IMR-90 (cell line): ENCODE measurements at regions of chr18 and their contacts with region 1.

Region 1: DNA sequence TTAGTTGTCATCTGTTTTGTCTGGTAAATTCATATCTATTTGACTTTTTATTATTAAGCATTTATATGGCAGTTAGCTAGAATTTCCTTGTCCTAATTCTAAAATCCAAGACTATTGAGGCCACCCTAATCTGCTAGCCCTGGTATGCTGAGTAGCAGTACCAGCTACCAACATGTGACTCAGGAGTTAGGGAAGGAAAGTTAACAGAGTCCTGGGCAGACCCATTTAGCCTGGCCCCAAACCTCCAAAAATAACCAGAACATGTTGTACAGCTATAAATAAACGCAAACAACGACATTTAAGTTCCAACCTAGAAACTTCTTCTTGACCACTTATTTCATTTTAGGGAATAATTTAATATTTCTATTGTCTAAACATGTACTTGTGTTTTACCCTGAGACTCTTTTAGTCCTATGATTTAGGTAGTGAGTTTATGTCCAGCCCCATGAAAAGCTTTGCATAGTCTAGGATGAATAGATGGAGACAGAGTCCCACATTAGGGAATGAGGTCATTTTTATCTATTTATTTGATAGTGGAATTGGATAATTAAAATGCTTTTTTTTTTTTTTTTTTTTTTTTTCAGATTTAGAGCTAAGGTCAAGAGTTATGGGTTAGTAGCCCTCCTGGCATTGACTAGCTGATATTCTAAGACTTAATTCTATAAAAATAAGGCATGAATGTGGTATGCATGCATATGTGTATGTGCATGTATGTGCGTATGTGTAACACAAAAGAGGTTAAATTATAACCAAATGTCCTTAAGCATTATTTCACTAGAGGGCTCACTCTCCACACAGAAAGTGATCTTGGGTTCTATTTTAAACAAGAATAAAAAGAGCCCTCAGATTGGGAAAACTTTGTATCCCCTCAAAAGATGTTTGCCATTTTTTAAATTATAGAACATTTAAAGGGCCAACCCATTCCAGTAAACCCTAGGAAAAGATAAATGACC is 160.1 kb upstream of the MAPRE2 start:
- DNase-seq: peak; percentile 43
- ATAC-seq: peak; percentile 56; the same call in 1 of the 2 replicates
- H3K4me3 ChIP-seq: no peak overlapping the region
- H3K27ac ChIP-seq: no peak overlapping the region
- H3K4me1 ChIP-seq: no peaks in the 10 kb centered on the region
- H3K27me3 ChIP-seq: no peaks in the 10 kb centered on the region
- CTCF ChIP-seq: peak; percentile 54
- POLR2A ChIP-seq: no peak
- RAD21 ChIP-seq: peak; percentile 58

Region 2: DNA sequence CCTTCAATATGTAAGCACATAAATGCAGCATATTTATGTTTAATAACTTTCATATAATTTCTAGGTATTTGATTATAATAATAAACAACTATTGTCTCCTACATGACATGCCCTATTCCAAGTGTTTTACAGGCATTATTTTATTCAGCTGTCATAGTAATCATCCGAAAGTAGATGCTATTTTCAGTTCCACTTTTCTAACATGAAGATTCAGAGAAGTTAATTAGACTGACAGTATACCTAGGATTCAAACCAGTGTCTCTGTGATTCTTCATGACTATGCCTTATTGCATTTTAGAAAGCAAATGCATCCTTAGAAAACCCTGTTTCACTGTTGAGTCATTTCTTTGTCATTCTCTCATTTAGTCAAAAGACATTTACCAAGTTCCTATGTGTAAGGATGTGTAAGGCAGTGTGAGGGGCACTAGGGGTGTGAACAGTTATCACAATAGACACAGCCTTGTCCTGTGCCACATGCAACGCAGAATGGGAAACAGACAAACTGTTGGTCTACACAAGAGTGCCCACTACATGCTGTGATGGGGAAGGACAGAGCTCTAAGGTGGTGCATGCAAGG is 91.3 kb before region 1 on chr18:
- CTCF ChIA-PET with region 1: no interaction called
- POLR2A ChIA-PET with region 1: no interaction called
- dilution Hi-C with region 1: no loop called
- in situ Hi-C with region 1: no loop called
- intact Hi-C with region 1: no loop called
- DNase-seq: peak; percentile 35
- ATAC-seq: peak; percentile 32
- H3K4me3 ChIP-seq: no peak overlapping the region
- H3K27ac ChIP-seq: no peak overlapping the region
- H3K4me1 ChIP-seq: peaks cover 1% of the 10 kb centered on the region; the same call in 1 of the 2 replicates
- H3K27me3 ChIP-seq: no peaks in the 10 kb centered on the region
- CTCF ChIP-seq: no peak
- POLR2A ChIP-seq: no peak
- RAD21 ChIP-seq: no peak

Region 3: GRCh38 chr18:34976899-34977837 is 96.0 kb after region 1 on chr18:
- CTCF ChIA-PET with region 1: interaction called, 4 read pairs
- POLR2A ChIA-PET with region 1: no interaction called
- dilution Hi-C with region 1: no loop called
- in situ Hi-C with region 1: no loop called
- intact Hi-C with region 1: loop called (anchors 1 kb)
- DNase-seq: peak; percentile 19
- ATAC-seq: peak; percentile 52
- H3K4me3 ChIP-seq: peak overlapping the region; percentile 73
- H3K27ac ChIP-seq: no peak overlapping the region
- H3K4me1 ChIP-seq: no peaks in the 10 kb centered on the region
- H3K27me3 ChIP-seq: peaks cover 25% of the 10 kb centered on the region
- CTCF ChIP-seq: no peak
- POLR2A ChIP-seq: no peak
- RAD21 ChIP-seq: no peak

Region 4: GRCh38 chr18:35005963-35006577 is 124.9 kb after region 1 on chr18:
- CTCF ChIA-PET with region 1: interaction called, 4 read pairs
- POLR2A ChIA-PET with region 1: no interaction called
- dilution Hi-C with region 1: no loop called
- in situ Hi-C with region 1: no loop called
- intact Hi-C with region 1: loop called (anchors 1 kb)
- DNase-seq: peak; percentile 70
- ATAC-seq: peak; percentile 88
- H3K4me3 ChIP-seq: no peak overlapping the region
- H3K27ac ChIP-seq: no peak overlapping the region
- H3K4me1 ChIP-seq: no peaks in the 10 kb centered on the region
- H3K27me3 ChIP-seq: no peaks in the 10 kb centered on the region
- CTCF ChIP-seq: peak; percentile 70
- POLR2A ChIP-seq: no peak
- RAD21 ChIP-seq: peak; percentile 90

Region 5: DNA sequence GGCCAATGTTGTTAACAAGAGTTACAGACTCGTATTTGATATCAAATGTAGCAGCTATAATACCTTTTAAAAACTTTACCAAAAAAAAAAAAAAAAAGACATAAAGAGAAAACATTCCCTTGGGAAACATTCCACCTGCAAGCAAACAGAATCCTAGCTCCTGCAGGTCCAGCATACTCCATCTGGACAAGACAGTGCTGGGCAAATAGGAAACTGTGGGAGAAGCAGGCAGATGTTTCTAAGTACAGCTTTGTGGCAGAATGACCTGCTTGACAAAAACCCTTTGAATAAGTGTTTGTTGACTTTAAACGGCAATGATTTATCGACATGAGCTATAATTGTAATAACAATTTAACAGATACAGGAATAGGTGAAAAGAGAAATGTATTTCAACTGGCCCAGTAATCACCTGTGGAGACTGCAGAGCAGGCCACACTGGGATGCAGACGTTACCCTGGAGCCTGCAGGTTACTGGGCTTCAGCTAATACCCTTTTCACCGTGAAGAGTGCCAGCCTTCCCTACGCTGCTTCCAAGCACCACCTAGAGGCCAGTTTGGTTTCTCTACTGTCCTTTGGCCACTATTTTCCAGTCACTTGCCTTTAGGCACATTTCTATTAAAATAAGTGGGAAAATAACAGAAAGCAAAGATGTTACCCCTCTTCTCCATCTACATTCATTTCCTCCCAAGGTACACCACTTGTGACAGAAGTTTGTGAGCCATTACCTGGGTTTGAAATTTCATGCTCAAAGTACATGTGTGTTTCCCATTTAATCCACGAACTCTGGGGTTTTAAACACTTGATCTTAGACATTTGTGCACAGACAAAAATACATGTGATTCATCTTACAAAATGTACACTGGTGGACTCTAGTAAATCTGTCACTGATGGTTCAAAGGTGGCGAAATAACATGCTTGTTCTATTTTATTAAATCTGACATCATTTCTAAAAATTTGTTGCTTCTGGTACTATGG is 262.8 kb after region 1 on chr18:
- CTCF ChIA-PET with region 1: interaction called, 6 read pairs
- POLR2A ChIA-PET with region 1: no interaction called
- dilution Hi-C with region 1: no loop called
- in situ Hi-C with region 1: no loop called
- intact Hi-C with region 1: loop called (anchors 1 kb)
- DNase-seq: peak; percentile 55
- ATAC-seq: peak; percentile 89
- H3K4me3 ChIP-seq: no peak overlapping the region
- H3K27ac ChIP-seq: no peak overlapping the region
- H3K4me1 ChIP-seq: no peaks in the 10 kb centered on the region
- H3K27me3 ChIP-seq: no peaks in the 10 kb centered on the region
- CTCF ChIP-seq: peak; percentile 83
- POLR2A ChIP-seq: 0 out of 2 replicates have a peak, but pooled peaks have one; percentile 38
- RAD21 ChIP-seq: peak; percentile 95

Region 6: GRCh38 chr18:35240664-35241447 is 359.7 kb after region 1 on chr18 and contains the start of gene ZNF397:
- CTCF ChIA-PET with region 1: no interaction called
- POLR2A ChIA-PET with region 1: no interaction called
- dilution Hi-C with region 1: no loop called
- in situ Hi-C with region 1: no loop called
- intact Hi-C with region 1: no loop called
- DNase-seq: peak; percentile 96
- ATAC-seq: peak; percentile 100
- H3K4me3 ChIP-seq: peak within 1 kb of the TSS; percentile 53
- H3K27ac ChIP-seq: peak within 1 kb of the TSS; percentile 96
- H3K4me1 ChIP-seq: peaks cover 2% of the 10 kb centered on the region; the same call in 1 of the 2 replicates
- H3K27me3 ChIP-seq: no peaks in the 10 kb centered on the region
- CTCF ChIP-seq: no peak
- POLR2A ChIP-seq: peak; percentile 96
- RAD21 ChIP-seq: no peak
- total RNA-seq, gene ZNF397: 9.9 and 11.1 TPM in 2 replicates